ENCODE measurements at regions of chr19 and their contacts with region 1.

Region 1: DNA sequence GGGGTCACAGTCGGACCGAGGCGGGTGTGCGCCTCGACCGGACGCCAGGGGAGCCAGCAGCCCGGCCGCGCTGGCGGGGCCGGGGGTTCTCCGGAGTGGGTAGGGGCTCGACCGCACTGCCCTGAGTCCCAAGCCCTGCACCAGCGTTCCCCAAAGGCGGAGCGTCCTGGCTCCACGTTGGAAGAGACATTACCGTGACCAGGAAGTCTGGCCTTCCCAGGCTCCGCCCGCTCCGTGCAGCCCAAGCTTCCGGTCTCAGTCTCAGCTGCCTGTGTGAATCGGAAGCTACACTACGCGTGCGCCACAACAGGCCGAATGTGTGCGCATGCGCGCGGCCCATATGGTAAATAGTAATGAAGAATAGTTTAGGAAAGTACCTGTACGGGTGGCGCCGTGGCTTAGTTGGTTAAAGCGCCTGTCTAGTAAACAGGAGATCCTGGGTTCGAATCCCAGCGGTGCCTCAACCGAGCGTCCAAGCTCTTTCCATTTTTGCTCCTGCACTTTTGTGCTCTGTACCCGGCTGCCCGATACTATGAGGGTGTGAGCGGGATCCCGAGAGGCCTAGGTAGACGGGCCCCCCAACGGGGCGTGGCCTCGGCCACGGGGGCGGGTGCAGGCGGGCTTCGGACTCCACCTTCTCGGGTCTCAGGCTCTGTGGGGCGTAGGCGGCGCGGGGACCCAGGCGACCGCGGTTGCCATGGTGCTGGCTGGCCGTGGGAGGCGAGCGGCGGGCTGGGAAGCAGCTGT is 17.3 kb upstream of the LRP3 start:
- DNase-seq: peak; percentile 91 to 100 (median 99)
- ATAC-seq: peak; percentile 81
- H3K4me3 ChIP-seq: peak overlapping the region; percentile 98
- H3K4me3 Mint-ChIP-seq: peak overlapping the region; percentile 92 to 99 (median 97)
- H3K27ac ChIP-seq: peak overlapping the region; percentile 89
- H3K27ac Mint-ChIP-seq: peak overlapping the region; percentile 96 to 100 (median 100)
- H3K4me1 ChIP-seq: peaks cover 13 to 18% of the 10 kb centered on the region in 2 donors
- H3K4me1 Mint-ChIP-seq: peaks cover 29 to 58% (median 50%) of the 10 kb centered on the region in 7 donors
- H3K27me3 ChIP-seq: no peaks in the 10 kb centered on the region
- H3K27me3 Mint-ChIP-seq: peaks cover 0 to 13% (median 0%) of the 10 kb centered on the region in 5 donors

Region 2: GRCh38 chr19:32405431-32406161 is 771.2 kb before region 1 on chr19 and contains the start of gene DPY19L3:
- CTCF ChIA-PET with region 1: no interaction called
- POLR2A ChIA-PET with region 1: interaction called, 9 read pairs
- intact Hi-C with region 1: loop called (anchors 1 to 2 kb)
- DNase-seq: peak; percentile 74 to 96 (median 82)
- ATAC-seq: peak; percentile 95
- H3K4me3 ChIP-seq: peak within 1 kb of the TSS; percentile 85
- H3K4me3 Mint-ChIP-seq: peak within 1 kb of the TSS; percentile 83 to 93 (median 88)
- H3K27ac ChIP-seq: peak within 1 kb of the TSS; percentile 90
- H3K27ac Mint-ChIP-seq: peak within 1 kb of the TSS; percentile 86 to 91 (median 89)
- H3K4me1 ChIP-seq: peaks cover 4 to 12% of the 10 kb centered on the region in 2 donors
- H3K4me1 Mint-ChIP-seq: peaks cover 8 to 34% (median 17%) of the 10 kb centered on the region in 7 donors
- H3K27me3 ChIP-seq: no peaks in the 10 kb centered on the region
- H3K27me3 Mint-ChIP-seq: no peaks in the 10 kb centered on the region
- total RNA-seq, gene DPY19L3: 8.4 to 19.3 (median 15.8) TPM

Region 3: GRCh38 chr19:32458500-32459123 is 718.2 kb before region 1 on chr19:
- CTCF ChIA-PET with region 1: no interaction called
- POLR2A ChIA-PET with region 1: no interaction called
- intact Hi-C with region 1: no loop called
- DNase-seq: no peak
- ATAC-seq: no peak
- H3K4me3 ChIP-seq: no peak overlapping the region
- H3K4me3 Mint-ChIP-seq: peak overlapping the region in 1 of 10 donors; percentile 51
- H3K27ac ChIP-seq: no peak overlapping the region
- H3K27ac Mint-ChIP-seq: peak overlapping the region in 3 of 9 donors; percentile 2 to 29 (median 22)
- H3K4me1 ChIP-seq: no peaks in the 10 kb centered on the region
- H3K4me1 Mint-ChIP-seq: peaks cover 0 to 14% (median 0%) of the 10 kb centered on the region in 7 donors
- H3K27me3 ChIP-seq: no peaks in the 10 kb centered on the region
- H3K27me3 Mint-ChIP-seq: no peaks in the 10 kb centered on the region

Region 4: DNA sequence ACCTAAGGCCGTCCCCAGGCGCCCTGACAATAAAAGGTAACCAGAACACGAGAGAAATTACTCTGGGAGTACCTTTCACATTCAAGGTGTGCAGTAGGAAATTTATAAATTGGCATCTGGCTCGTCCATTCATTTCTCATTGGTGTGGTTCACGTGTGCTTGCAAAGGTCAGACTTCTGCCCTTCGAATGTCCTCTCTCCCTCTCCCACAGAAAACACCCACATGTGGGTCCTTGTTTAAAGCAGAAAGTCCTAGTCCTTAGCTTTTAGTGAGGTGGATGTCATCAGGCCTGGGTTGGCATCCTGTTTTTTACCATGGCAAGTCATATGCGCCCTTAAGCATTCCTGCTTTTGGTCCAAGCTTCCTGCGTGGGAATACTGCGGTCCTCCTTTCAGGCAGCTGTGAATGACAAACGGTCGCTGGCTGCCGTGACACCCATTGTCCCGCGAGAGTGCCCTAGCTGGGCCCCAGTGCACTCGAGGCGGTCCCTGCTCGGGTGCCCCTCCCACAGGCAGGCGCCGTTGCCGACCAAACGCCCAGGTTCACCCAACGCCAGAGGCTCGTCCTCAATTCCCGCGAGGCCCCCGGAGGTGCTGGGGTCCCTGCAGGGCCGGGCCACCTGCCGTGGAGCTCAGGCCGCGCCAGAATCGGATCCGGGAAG is 485.4 kb before region 1 on chr19 and contains the start of gene NUDT19:
- CTCF ChIA-PET with region 1: interaction called, 3 read pairs
- POLR2A ChIA-PET with region 1: no interaction called
- intact Hi-C with region 1: loop called in 1 of 2 experiments (anchors 5 kb)
- DNase-seq: peak; percentile 50 to 82 (median 62)
- ATAC-seq: peak; percentile 87
- H3K4me3 ChIP-seq: peak within 1 kb of the TSS; percentile 50
- H3K4me3 Mint-ChIP-seq: peak within 1 kb of the TSS; percentile 83 to 97 (median 92)
- H3K27ac ChIP-seq: peak within 1 kb of the TSS; percentile 68
- H3K27ac Mint-ChIP-seq: peak within 1 kb of the TSS; percentile 37 to 93 (median 85)
- H3K4me1 ChIP-seq: peaks cover 20 to 24% of the 10 kb centered on the region in 2 donors
- H3K4me1 Mint-ChIP-seq: peaks cover 35 to 52% (median 47%) of the 10 kb centered on the region in 7 donors
- H3K27me3 ChIP-seq: no peaks in the 10 kb centered on the region
- H3K27me3 Mint-ChIP-seq: no peaks in the 10 kb centered on the region
- total RNA-seq, gene NUDT19: 8.4 to 17.0 (median 9.0) TPM

Region 5: DNA sequence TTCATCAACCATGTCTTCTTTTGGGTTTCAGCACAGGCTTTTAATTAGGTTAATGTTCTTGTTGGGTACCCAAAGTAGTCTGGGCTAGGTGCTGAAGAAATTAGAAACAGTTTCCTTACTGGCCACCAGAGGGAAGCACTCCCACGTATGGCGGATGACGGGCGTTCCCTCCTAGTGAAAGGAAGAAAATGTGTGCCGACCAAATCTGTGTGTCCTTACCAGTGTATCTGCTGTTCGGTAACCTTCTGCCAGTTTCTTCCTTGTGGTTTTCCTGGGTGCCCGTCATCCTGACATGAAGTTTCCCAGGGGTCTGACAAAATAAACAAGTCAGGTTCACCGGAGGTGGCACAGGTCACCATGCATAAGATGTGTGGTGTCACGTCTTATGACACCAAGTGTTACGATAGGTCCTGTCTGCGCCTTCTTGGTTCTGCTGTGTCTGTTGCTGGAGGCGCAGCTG is 50.9 kb before region 1 on chr19:
- CTCF ChIA-PET with region 1: interaction called, 6 read pairs
- POLR2A ChIA-PET with region 1: interaction called, 5 read pairs
- intact Hi-C with region 1: loop called (anchors 1 to 2 kb)
- DNase-seq: peak; percentile 14 to 68 (median 55)
- ATAC-seq: peak; percentile 96
- H3K4me3 ChIP-seq: no peak overlapping the region
- H3K4me3 Mint-ChIP-seq: no peak overlapping the region
- H3K27ac ChIP-seq: no peak overlapping the region
- H3K27ac Mint-ChIP-seq: peak overlapping the region in 4 of 9 donors; percentile 34 to 71 (median 60)
- H3K4me1 ChIP-seq: no peaks in the 10 kb centered on the region
- H3K4me1 Mint-ChIP-seq: peaks cover 0 to 9% (median 7%) of the 10 kb centered on the region in 7 donors
- H3K27me3 ChIP-seq: no peaks in the 10 kb centered on the region
- H3K27me3 Mint-ChIP-seq: no peaks in the 10 kb centered on the region

Region 6: GRCh38 chr19:33235269-33235995 is 58.6 kb after region 1 on chr19:
- CTCF ChIA-PET with region 1: interaction called, 4 read pairs
- POLR2A ChIA-PET with region 1: no interaction called
- intact Hi-C with region 1: loop called in 1 of 2 experiments (anchors 1 kb)
- DNase-seq: peak; percentile 37 to 82 (median 53)
- ATAC-seq: peak; percentile 70
- H3K4me3 ChIP-seq: no peak overlapping the region
- H3K4me3 Mint-ChIP-seq: no peak overlapping the region
- H3K27ac ChIP-seq: no peak overlapping the region
- H3K27ac Mint-ChIP-seq: no peak overlapping the region
- H3K4me1 ChIP-seq: peaks cover 0 to 12% of the 10 kb centered on the region in 2 donors
- H3K4me1 Mint-ChIP-seq: peaks cover 0 to 4% (median 0%) of the 10 kb centered on the region in 7 donors
- H3K27me3 ChIP-seq: no peaks in the 10 kb centered on the region
- H3K27me3 Mint-ChIP-seq: peaks cover 4 to 11% (median 7%) of the 10 kb centered on the region in 5 donors

Region 7: GRCh38 chr19:33248954-33249613 is 72.2 kb after region 1 on chr19:
- CTCF ChIA-PET with region 1: no interaction called
- POLR2A ChIA-PET with region 1: no interaction called
- intact Hi-C with region 1: no loop called
- DNase-seq: no peak
- ATAC-seq: peak; percentile 79
- H3K4me3 ChIP-seq: no peak overlapping the region
- H3K4me3 Mint-ChIP-seq: no peak overlapping the region
- H3K27ac ChIP-seq: no peak overlapping the region
- H3K27ac Mint-ChIP-seq: no peak overlapping the region
- H3K4me1 ChIP-seq: no peaks in the 10 kb centered on the region
- H3K4me1 Mint-ChIP-seq: peaks cover 0 to 2% (median 0%) of the 10 kb centered on the region in 7 donors
- H3K27me3 ChIP-seq: no peaks in the 10 kb centered on the region
- H3K27me3 Mint-ChIP-seq: peaks cover 0 to 6% (median 0%) of the 10 kb centered on the region in 5 donors

Region 8: GRCh38 chr19:34351382-34351826 is 1174.6 kb after region 1 on chr19:
- CTCF ChIA-PET with region 1: no interaction called
- POLR2A ChIA-PET with region 1: no interaction called
- intact Hi-C with region 1: loop called in 1 of 2 experiments (anchors 5 kb)
- DNase-seq: peak in 1 of 9 donors; percentile 16
- ATAC-seq: no peak
- H3K4me3 ChIP-seq: no peak overlapping the region
- H3K4me3 Mint-ChIP-seq: peak overlapping the region in 7 of 10 donors; percentile 12 to 75 (median 45)
- H3K27ac ChIP-seq: peak overlapping the region; percentile 43
- H3K27ac Mint-ChIP-seq: peak overlapping the region in 8 of 9 donors; percentile 76 to 91 (median 86)
- H3K4me1 ChIP-seq: peaks cover 18 to 25% of the 10 kb centered on the region in 2 donors
- H3K4me1 Mint-ChIP-seq: peaks cover 13 to 41% (median 26%) of the 10 kb centered on the region in 7 donors
- H3K27me3 ChIP-seq: no peaks in the 10 kb centered on the region
- H3K27me3 Mint-ChIP-seq: no peaks in the 10 kb centered on the region